ENCODE measurements at regions of chr12 and their contacts with region 1.

Region 1: DNA sequence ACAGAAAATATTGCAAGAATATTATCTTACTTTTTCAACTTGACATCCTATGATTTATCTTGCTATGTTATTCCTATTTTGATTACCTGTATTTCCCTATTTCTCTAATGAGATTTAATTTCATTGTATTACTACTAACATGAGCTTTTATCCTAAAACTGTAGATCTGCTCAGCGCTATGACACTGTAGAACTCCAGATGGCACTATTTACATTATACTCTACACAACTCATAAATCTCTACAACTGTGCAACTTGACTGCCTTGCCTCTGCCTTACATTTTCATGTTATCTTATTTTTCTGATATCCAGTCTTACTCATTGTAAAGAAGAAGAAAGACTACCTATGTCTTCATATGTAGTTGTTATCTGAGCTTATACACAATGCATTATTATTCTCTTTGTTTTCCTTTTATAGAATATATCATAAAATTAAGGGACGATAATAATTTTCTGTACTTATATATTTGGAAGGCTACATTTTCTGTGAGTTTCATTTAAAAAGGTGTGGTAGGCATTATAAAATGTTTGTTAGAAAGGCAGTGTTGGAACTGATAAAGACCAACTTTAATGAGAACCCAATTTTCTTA is 24.1 kb downstream of the NUP37 start:
- DNase-seq: no peak
- H3K4me3 ChIP-seq: no peak overlapping the region
- H3K27ac ChIP-seq: no peak overlapping the region
- H3K4me1 ChIP-seq: no peaks in the 10 kb centered on the region
- H3K27me3 ChIP-seq: no peaks in the 10 kb centered on the region
- CTCF ChIP-seq: peak; percentile 9 to 16

Region 2: DNA sequence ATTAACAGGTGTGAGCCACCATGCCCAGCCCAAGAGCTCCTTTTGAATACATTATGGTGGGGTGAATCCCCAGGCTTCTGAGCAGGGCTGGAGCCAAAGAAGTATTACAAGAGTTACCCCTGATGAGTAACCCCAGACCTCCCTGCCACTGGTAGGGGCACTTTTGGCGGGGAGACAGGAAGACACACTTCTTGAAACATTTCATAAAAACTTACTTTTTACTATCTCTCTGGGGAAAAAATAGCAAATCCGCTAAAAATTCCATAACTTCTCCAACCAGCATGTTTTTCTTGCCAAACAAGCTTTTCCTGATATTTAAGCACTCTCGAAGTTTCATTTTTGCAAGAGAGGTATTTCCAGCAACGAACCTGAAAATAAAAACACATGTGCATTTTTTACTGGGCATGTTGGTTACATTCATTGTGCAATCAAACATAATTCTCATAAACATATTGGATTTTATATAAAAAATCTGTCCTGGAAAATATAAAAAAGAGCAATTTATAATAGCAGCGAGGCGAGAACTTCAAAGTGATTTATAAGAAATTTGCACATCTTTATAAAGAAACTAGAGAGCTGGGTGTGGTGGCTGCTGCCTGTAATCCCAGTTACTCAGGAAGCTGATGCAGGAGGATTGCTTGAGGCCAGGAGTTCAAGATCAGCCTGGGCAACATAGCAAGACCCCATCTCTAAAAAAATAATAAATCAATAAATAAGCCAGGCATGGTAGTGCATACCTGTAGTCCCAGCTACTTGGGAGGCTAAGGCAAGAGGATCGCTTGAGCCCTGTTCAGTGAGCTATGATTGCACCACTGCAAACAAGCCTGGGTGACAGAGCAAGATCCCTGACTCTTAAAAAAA is 1765.4 kb after region 1 on chr12:
- intact Hi-C with region 1: loop called (anchors 10 kb)
- DNase-seq: no peak
- H3K4me3 ChIP-seq: no peak overlapping the region
- H3K27ac ChIP-seq: peak overlapping the region; percentile 85 to 91
- H3K4me1 ChIP-seq: peaks cover 0 to 55% (median 25%) of the 10 kb centered on the region in 4 donors
- H3K27me3 ChIP-seq: no peaks in the 10 kb centered on the region
- CTCF ChIP-seq: no peak